ENCODE measurements at regions of chr18 and their contacts with region 1.

Region 1: GRCh38 chr18:3297025-3297984 is 35.4 kb downstream of the MYL12B start:
- DNase-seq: peak; percentile 78
- H3K4me3 ChIP-seq: peak overlapping the region; percentile 66
- H3K27ac ChIP-seq: no peak overlapping the region
- H3K4me1 ChIP-seq: no peaks in the 10 kb centered on the region
- H3K27me3 ChIP-seq: no peaks in the 10 kb centered on the region

Region 2: DNA sequence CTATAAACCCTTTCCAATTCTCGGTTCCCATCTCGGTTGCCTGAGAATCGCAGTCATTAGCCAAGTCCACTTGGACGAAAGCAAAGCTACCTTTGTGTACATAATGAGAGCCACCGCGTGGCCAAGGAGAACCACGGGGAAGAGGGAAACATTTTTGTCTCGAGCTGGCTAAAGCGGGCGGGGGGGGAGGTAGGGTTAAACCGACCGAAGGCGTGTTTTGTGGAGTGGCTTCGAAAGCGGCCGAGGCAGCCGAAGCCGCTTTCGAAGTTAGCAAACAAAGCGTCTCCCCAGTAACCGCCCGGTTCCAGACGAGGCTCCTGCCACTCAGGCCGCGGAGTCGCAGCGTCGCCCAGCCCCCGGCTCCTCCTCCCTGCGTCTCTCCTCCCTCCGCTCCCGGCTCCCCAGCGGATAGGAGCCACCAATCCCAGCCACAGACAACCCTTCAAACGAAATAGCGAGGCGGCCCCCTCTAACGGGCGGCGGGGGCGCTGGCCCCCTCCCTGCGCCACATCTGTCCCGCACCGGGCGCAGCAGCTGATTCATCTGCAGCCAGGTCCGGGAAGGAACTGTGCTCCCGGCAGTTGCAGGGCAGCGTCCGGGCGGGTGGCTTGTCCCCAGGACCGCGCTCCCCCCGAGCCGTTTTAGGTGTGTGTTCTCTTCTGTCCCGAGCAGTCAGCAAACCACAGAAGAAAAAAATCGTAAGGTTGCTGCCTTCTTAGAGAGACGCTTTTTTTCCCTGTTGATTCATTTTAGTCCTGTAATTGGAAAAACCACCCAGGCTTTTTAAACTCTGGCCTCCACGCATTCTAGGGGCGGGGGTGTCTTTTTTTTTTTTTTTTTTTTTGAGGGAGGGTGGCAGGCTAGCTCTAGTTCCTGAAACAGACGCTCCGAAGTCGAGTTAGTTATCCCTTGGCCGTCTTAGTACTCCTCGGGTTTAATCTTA is 150.9 kb after region 1 on chr18:
- in situ Hi-C with region 1: loop called (anchors 10 kb)
- DNase-seq: peak; percentile 99
- H3K4me3 ChIP-seq: peak overlapping the region; percentile 98
- H3K27ac ChIP-seq: peak overlapping the region; percentile 100
- H3K4me1 ChIP-seq: peaks cover 17% of the 10 kb centered on the region
- H3K27me3 ChIP-seq: no peaks in the 10 kb centered on the region

Region 3: DNA sequence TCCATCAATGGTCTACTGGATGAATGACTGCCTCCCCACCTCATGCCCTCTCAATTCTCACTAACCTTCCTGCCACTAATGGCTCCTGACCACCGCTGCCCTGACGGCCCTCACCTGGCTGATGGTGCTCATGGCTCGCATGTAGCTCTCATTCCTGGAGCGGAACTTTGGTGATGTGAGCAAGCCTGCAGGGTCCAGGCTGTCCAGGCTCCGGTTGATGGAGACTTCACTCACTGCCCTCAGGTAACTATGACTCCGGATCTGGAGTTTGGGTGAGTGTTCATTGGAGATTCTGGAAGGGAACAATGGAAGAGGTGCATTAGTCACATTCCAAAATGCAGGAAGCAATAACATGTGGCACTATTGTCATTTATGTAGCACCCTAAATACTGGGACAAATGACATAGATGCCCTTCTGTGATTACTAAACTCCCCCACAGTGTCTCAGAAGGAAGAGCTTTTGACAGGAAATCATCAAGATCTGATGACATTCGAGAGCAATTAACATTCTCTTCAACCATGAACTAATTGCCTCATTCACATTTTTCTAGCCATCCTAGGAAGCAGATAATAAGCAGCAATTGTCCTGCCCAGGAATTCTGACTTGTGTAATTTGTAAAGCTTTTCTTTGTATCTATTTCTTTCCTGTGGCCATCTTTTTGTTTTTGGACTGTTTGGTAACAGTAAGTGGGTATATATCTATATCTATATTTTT is 445.1 kb after region 1 on chr18:
- in situ Hi-C with region 1: no loop called
- DNase-seq: no peak
- H3K4me3 ChIP-seq: no peak overlapping the region
- H3K27ac ChIP-seq: no peak overlapping the region
- H3K4me1 ChIP-seq: no peaks in the 10 kb centered on the region; the same call in 1 of the 2 replicates
- H3K27me3 ChIP-seq: no peaks in the 10 kb centered on the region

Region 4: GRCh38 chr18:3995476-3996102 is 698.3 kb after region 1 on chr18:
- in situ Hi-C with region 1: loop called (anchors 25 kb)
- DNase-seq: peak; percentile 74
- H3K4me3 ChIP-seq: no peak overlapping the region
- H3K27ac ChIP-seq: no peak overlapping the region
- H3K4me1 ChIP-seq: peaks cover 5% of the 10 kb centered on the region; the same call in 1 of the 2 replicates
- H3K27me3 ChIP-seq: no peaks in the 10 kb centered on the region

Measured in GM23248 (cell line).